ENCODE measurements at regions of chr19 and their contacts with region 1.

Region 1: DNA sequence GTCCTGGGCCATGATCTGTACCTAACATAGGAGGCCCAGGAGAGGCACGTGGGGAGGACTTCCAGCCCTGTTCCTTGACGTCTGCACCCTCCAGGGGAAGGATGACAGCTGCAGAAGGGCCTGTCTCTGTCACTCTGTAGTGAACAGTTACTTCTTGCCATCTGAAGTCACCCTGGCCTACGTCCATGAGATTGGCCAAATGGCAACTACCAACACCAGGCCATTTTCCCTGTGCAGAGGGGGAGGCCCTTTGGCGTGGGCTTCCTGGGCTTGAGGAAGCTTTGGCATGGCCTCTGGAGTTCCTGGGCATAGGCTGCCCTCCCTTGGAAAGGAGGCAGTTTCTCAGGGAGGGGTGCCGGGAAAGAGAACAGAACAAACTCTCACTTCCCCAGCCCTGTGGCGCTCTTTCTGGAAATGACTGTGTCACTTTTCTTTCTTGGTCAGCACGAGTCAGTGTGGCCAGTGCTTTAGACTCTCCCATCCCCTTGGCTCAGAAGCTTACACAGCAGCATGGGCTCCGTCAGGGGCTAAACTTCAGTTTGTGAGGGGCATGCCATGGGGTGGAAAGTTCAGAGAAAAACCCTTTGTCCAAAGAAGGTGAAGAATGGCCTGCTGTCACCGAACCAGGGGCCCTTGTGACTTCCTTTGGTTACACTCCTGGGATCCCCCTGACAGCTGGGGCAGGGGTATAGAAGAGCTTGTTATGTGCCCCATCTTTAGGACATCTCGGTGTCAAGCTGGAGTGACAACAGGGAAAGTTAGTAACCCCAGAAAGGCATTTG is 5.3 kb downstream of the CARM1 start:
- DNase-seq: peak; percentile 79
- ATAC-seq: peak; percentile 80
- H3K4me3 ChIP-seq: peak overlapping the region; percentile 60
- H3K27ac ChIP-seq: peak overlapping the region; percentile 97
- H3K4me1 ChIP-seq: peaks cover 57% of the 10 kb centered on the region
- H3K27me3 ChIP-seq: no peaks in the 10 kb centered on the region
- CTCF ChIP-seq: no peak
- EP300 ChIP-seq: peak; percentile 61 to 96; a peak in 3 of 4 replicates
- POLR2A ChIP-seq: peak; percentile 64; the same call in 1 of the 2 replicates
- RAD21 ChIP-seq: no peak

Region 2: DNA sequence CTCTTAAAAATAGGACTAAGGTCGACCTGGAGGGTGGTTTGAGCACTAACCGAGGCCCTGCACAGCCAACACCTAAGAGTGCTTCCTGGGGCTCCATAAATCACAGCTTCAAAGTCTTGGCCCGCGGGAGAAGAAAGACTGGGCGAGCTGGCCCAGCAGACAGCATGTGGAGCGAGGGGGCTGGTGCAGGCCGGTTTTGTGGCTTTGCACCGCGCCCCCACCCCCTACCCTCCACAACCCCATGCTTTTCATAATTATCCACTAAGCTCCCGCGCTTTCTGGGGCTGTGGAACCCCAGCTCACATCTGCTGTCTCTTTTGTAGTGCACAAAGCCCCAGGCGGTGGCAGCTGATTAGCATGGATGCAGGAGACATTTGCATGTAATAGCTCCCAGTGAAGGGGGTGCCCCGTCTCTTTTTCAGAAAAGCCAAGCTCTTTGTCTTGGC is 11.8 kb after region 1 on chr19:
- CTCF ChIA-PET with region 1: interaction called, 21 read pairs
- POLR2A ChIA-PET with region 1: interaction called, 11 read pairs
- RAD21 ChIA-PET with region 1: interaction called, 42 read pairs
- SMC1A ChIA-PET with region 1: interaction called, 28 read pairs
- in situ Hi-C with region 1: no loop called
- intact Hi-C with region 1: no loop called
- DNase-seq: no peak
- ATAC-seq: peak; percentile 79
- H3K4me3 ChIP-seq: no peak overlapping the region
- H3K27ac ChIP-seq: peak overlapping the region; percentile 53
- H3K4me1 ChIP-seq: peaks cover 20% of the 10 kb centered on the region
- H3K27me3 ChIP-seq: no peaks in the 10 kb centered on the region
- CTCF ChIP-seq: no peak
- EP300 ChIP-seq: no peak
- POLR2A ChIP-seq: no peak
- RAD21 ChIP-seq: no peak

Region 3: DNA sequence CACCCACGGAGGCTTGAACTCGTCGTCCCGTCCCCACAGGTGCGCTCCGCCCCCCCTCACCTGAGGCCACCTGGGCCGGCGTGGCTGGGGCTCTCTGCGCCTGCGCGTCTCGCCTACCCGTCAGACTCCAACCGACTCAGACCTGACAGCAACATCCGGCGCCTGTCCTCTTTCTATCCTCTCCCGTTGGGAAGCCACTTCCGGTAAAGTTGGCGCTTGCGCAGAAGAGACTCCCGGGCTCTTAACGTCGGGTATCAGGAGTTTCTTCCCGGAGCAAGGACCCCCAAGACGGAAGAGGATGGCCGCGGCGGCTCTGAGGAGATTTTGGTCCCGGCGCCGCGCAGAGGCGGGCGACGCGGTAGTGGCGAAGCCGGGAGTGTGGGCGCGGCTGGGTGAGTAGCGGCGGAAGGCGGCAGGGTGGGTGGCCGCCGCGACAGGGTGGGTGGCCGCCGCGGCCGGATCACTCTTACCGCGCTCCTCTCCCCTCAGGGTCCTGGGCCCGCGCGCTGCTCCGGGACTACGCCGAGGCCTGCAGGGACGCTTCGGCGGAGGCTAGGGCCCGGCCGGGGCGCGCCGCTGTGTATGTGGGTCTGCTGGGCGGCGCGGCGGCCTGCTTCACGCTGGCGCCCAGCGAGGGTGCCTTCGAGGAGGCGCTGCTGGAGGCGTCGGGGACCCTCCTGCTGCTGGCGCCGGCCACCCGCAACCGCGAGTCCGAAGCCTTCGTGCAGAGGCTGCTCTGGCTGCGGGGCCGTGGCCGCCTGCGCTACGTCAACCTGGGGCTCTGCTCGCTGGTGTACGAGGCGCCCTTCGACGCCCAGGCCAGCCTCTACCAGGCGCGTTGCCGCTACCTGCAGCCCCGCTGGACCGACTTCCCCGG is 52.1 kb after region 1 on chr19 and contains the starts of genes TIMM29 and YIPF2:
- CTCF ChIA-PET with region 1: interaction called, 5 read pairs
- POLR2A ChIA-PET with region 1: interaction called, 10 read pairs
- RAD21 ChIA-PET with region 1: interaction called, 4 read pairs
- SMC1A ChIA-PET with region 1: interaction called, 7 read pairs
- in situ Hi-C with region 1: no loop called
- intact Hi-C with region 1: loop called (anchors 2 kb)
- DNase-seq: peak; percentile 87
- ATAC-seq: peak; percentile 94
- H3K4me3 ChIP-seq: peak within 1 kb of the TSS; percentile 89
- H3K27ac ChIP-seq: peak within 1 kb of the TSS; percentile 46
- H3K4me1 ChIP-seq: peaks cover 7% of the 10 kb centered on the region
- H3K27me3 ChIP-seq: no peaks in the 10 kb centered on the region
- CTCF ChIP-seq: no peak
- EP300 ChIP-seq: 0 out of 4 replicates have a peak, but pooled peaks of 1 of the 2 experiments have one; percentile 41
- POLR2A ChIP-seq: peak; percentile 83
- RAD21 ChIP-seq: no peak
- polyA plus RNA-seq, gene TIMM29: 2.4 to 6.5 TPM
- polyA plus RNA-seq, gene YIPF2: 0.92 to 3.9 TPM